ENCODE measurements at regions of chr17 and their contacts with region 1.

Region 1: GRCh38 chr17:7351665-7352501 is at the start of gene KCTD11:
- DNase-seq: peak; percentile 78
- ATAC-seq: peak; percentile 63
- H3K4me3 Mint-ChIP-seq: peak within 1 kb of the TSS; percentile 87
- H3K27ac Mint-ChIP-seq: peak within 1 kb of the TSS; percentile 87
- H3K4me1 Mint-ChIP-seq: peaks cover 42% of the 10 kb centered on the region
- H3K27me3 Mint-ChIP-seq: no peaks in the 10 kb centered on the region
- CTCF ChIP-seq: no peak
- total RNA-seq, gene KCTD11: 7.2 and 7.8 TPM in 2 replicates

Region 2: DNA sequence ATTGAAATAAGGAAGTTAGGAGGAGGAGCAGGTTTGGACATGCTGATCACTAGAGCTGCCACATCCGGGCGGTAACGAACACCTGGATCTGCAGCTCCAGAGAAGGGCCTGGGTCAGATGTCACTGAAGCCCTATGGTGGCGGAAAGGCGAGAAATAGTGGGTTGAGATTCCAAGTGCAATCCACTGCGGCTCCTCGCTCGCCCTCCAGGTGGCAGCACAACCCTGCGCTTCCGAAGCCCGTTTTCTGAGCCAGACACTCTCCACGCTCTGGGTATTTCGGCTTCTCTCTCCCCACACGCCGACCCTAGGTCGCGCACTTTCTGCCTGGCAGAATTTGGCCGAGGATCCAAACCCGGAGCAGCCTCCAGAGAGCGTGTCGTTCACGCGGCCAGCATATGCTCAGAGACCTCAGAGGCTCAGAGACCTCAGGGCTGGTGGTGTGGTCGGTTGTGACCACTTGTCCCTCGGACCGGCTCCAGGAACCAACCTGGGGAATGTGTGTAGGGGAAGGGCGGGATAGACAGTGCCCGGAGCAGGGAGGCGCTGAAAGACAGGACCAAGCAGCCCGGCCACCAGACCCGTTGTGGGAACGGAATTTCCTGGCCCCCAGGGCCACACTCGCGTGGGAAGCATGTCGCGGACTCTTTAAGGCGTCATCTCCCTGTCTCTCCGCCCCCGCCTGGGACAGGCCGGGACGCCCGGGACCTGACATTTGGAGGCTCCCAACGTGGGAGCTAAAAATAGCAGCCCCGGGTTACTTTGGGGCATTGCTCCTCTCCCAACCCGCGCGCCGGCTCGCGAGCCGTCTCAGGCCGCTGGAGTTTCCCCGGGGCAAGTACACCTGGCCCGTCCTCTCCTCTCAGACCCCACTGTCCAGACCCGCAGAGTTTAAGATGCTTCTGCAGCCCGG is 71.1 kb before region 1 on chr17:
- CTCF ChIA-PET with region 1: interaction called, 3 read pairs
- POLR2A ChIA-PET with region 1: interaction called, 4 read pairs
- intact Hi-C with region 1: loop called (anchors 1 kb)
- DNase-seq: peak; percentile 82
- ATAC-seq: peak; percentile 83
- H3K4me3 Mint-ChIP-seq: peak overlapping the region; percentile 82
- H3K27ac Mint-ChIP-seq: peak overlapping the region; percentile 77
- H3K4me1 Mint-ChIP-seq: peaks cover 14% of the 10 kb centered on the region
- H3K27me3 Mint-ChIP-seq: peaks cover 12% of the 10 kb centered on the region
- CTCF ChIP-seq: peak; percentile 42

Region 3: GRCh38 chr17:7323731-7324437 is 28.0 kb before region 1 on chr17:
- CTCF ChIA-PET with region 1: interaction called, 19 read pairs
- POLR2A ChIA-PET with region 1: interaction called, 28 read pairs
- intact Hi-C with region 1: loop called (anchors 1 kb)
- DNase-seq: peak; percentile 62
- ATAC-seq: peak; percentile 41
- H3K4me3 Mint-ChIP-seq: no peak overlapping the region
- H3K27ac Mint-ChIP-seq: no peak overlapping the region
- H3K4me1 Mint-ChIP-seq: peaks cover 15% of the 10 kb centered on the region
- H3K27me3 Mint-ChIP-seq: no peaks in the 10 kb centered on the region
- CTCF ChIP-seq: peak; percentile 64

Region 4: DNA sequence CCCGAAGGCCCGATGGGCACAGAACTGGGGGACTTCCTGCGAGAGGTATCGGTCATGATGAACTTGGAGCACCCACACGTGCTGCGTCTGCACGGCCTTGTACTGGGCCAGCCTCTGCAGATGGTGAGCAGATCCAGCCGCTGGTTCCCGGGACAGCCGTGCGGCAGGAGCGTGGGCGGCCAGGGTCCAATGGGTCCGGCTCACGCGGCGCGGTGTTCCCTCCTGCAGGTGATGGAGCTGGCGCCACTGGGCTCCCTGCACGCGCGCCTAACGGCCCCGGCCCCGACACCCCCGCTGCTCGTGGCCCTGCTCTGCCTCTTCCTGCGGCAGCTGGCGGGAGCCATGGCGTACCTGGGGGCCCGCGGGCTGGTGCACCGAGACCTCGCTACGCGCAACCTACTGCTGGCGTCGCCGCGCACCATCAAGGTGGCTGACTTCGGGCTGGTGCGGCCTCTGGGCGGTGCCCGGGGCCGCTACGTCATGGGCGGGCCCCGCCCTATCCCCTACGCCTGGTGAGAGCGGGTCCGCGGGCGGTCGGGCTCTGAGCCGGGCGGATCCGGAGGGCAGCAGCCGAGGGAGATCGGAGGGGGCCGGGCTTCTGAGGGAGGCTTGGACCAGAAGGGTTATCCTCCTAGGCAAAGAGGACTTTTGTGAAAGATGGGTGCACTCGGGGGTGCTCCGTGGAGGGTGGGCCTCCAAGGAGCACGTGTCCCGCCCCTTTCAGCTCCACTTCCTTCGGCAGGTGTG is 32.0 kb after region 1 on chr17:
- CTCF ChIA-PET with region 1: interaction called, 4 read pairs
- POLR2A ChIA-PET with region 1: interaction called, 5 read pairs
- intact Hi-C with region 1: loop called (anchors 2 kb)
- DNase-seq: peak; percentile 82
- ATAC-seq: peak; percentile 98
- H3K4me3 Mint-ChIP-seq: peak overlapping the region; percentile 86
- H3K27ac Mint-ChIP-seq: peak overlapping the region; percentile 80
- H3K4me1 Mint-ChIP-seq: peaks cover 10% of the 10 kb centered on the region
- H3K27me3 Mint-ChIP-seq: peaks cover 29% of the 10 kb centered on the region
- CTCF ChIP-seq: no peak

Region 5: DNA sequence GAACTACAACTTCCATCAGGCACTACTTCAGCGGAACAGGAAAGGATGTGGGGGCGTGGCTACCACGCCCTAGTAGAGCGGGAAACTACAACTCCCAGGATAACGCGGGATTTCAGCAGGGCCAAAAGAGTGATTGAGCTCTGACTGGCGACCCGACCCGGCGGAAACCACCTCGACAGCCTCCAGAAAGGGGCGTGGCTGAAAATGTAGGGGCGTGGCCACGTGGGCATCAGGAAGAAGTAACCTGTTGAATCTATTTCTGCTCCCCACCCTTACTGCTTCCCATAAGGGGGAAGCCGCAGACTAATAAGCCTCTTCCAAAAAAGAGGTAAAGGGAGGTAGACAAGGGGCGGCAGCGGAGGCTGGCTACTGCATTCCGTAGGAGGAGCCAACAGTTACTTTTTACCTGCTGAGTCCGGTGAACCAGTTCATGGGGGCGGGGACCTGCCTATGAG is 83.4 kb after region 1 on chr17 and contains the start of gene TMEM102:
- CTCF ChIA-PET with region 1: interaction called, 31 read pairs
- POLR2A ChIA-PET with region 1: interaction called, 12 read pairs
- intact Hi-C with region 1: loop called (anchors 1 kb)
- DNase-seq: peak; percentile 95
- ATAC-seq: peak; percentile 87
- H3K4me3 Mint-ChIP-seq: peak within 1 kb of the TSS; percentile 94
- H3K27ac Mint-ChIP-seq: peak within 1 kb of the TSS; percentile 93
- H3K4me1 Mint-ChIP-seq: peaks cover 45% of the 10 kb centered on the region
- H3K27me3 Mint-ChIP-seq: peaks cover 15% of the 10 kb centered on the region
- CTCF ChIP-seq: no peak
- total RNA-seq, gene TMEM102: 13.4 and 14.8 TPM in 2 replicates

Region 6: DNA sequence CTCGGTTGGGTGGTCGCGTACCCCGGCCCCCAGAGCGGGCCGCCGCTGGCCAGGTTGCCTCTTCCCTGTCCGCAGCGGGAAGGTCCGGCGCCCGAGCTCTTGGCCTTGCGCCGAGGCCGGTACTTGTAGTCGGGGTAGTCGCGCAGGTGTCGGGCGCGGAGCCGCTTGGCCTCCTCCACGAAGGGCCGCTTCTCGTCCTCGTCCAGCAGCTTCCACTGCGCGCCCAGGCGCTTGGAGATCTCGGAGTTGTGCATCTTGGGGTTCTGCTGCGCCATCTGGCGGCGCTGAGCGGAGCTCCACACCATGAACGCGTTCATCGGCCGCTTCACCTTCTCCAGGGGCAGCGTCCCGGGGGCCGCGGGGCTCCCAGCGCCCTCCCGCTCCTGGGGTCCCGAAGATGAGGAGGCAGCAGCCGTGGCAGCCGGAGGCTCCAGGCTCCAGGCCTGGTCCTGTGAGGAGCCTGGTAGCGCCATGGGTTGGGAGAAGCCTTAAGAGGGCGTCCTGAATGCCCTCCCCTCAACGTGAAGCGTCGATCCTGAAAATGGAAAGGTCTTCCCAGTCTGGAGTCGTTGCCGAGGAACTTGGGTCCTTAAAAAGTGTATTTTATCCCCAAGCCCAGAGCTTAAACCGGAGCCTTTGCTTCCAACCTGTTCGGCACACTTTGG is 237.5 kb after region 1 on chr17:
- CTCF ChIA-PET with region 1: interaction called, 21 read pairs
- POLR2A ChIA-PET with region 1: interaction called, 4 read pairs
- intact Hi-C with region 1: no loop called
- DNase-seq: peak; percentile 66
- ATAC-seq: peak; percentile 89
- H3K4me3 Mint-ChIP-seq: no peak overlapping the region
- H3K27ac Mint-ChIP-seq: no peak overlapping the region
- H3K4me1 Mint-ChIP-seq: peaks cover 13% of the 10 kb centered on the region
- H3K27me3 Mint-ChIP-seq: no peaks in the 10 kb centered on the region
- CTCF ChIP-seq: peak; percentile 44